B cell (primary cell): ENCODE measurements at regions of chr4 and their contacts with region 1.

Region 1: DNA sequence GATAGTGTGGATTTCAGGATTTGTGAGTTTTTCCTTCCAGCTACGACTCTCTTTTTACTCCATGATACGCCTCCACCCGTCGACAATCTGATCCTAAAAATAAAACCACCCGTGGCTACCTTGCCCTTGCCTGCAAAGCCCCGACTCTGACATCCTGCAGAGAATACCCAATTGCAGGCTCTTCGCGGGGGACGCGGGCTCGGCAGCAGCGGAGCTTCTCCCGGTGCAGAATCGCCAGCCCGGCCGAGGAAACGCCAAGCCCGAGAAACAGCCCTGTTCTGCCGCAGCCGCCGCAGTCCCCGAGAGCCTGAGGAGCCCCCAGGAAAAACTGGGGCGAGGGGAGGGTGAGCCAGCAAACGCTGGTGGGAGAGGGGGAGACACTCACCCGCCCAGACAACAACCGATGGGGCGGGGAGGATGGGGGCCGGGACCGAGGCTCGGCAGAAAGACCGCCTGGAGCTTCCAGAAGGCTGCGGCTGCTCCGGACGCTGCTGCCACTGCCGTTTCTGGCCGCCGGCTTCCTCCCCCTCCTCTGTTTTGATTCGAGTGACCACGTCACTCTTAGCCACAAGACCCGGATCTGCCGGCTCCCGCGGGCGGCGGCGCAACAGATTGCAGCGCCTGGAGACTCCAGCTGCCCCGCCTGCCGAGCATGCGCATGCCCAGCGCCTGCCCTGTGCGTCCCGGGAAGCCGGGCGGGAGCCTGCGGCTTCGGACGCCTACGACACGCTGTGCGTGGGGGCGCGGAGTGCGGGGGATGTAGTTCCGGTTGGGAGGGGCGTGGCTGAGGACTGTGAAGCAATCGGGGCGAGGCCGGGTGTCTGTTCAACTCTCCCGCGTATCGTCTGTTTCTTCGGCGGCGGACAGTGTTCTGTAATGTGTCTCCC is at the start of gene SMIM14:
- DNase-seq: peak; percentile 93
- ATAC-seq: peak; percentile 80
- H3K4me3 ChIP-seq: peak within 1 kb of the TSS; percentile 79 to 98 (median 93)
- H3K4me3 Mint-ChIP-seq: peak within 1 kb of the TSS; percentile 91
- H3K27ac ChIP-seq: peak within 1 kb of the TSS; percentile 87 to 92
- H3K27ac Mint-ChIP-seq: peak within 1 kb of the TSS; percentile 91
- H3K4me1 ChIP-seq: peaks cover 39% of the 10 kb centered on the region in 2 donors
- H3K4me1 Mint-ChIP-seq: peaks cover 56% of the 10 kb centered on the region
- H3K27me3 ChIP-seq: no peaks in the 10 kb centered on the region
- H3K27me3 Mint-ChIP-seq: no peaks in the 10 kb centered on the region
- CTCF ChIP-seq: no peak
- total RNA-seq, gene SMIM14: 43.5 and 56.0 TPM in 2 replicates

Region 2: DNA sequence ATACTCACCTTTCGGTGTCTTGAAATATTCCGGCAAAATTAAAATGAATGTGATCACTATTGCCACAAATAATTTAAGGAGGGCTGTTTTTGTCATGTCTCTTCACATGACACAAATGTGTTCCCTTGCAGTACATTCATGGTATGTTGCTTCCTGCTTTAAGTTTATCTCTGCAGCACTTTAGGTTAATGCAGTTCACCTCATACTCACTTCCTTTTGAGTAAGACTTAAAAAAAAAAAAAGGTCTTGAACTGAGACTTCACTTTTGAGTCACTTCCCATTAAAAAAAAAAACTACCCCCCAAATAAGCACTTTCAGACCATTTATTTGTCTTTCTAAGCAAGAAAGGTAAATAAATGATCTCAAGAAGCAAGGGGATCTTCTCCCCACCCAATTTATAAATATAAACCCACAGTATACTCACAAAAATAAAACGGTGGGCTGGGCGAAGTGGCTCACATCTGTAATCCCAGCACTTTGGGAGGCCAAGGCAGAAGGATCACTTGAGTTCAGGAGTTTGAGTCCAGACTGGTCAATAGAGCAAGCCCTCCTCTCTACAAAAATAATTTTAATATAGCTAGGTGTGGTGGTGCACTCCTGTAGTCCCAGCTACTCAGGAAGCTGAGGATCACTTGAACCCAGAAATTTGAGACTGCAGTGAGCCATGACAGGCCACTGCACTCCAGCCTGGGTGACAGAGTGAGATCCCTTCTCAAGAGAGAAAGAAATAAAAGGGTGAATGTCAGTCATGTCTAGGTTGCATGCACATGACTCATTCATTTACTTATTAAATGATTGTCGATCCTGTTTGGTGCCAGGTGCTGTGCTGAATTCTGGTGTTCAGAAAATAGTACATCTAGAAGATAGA is 606.1 kb before region 1 on chr4 and contains the start of gene TMEM156:
- CTCF ChIA-PET with region 1: no interaction called
- POLR2A ChIA-PET with region 1: no interaction called
- intact Hi-C with region 1: loop called (anchors 10 kb)
- DNase-seq: peak; percentile 78
- ATAC-seq: peak; percentile 68
- H3K4me3 ChIP-seq: peak within 1 kb of the TSS; percentile 63 to 98 (median 69)
- H3K4me3 Mint-ChIP-seq: peak within 1 kb of the TSS; percentile 85
- H3K27ac ChIP-seq: peak within 1 kb of the TSS; percentile 72 to 84
- H3K27ac Mint-ChIP-seq: peak within 1 kb of the TSS; percentile 87
- H3K4me1 ChIP-seq: peaks cover 27 to 36% of the 10 kb centered on the region in 2 donors
- H3K4me1 Mint-ChIP-seq: peaks cover 54% of the 10 kb centered on the region
- H3K27me3 ChIP-seq: no peaks in the 10 kb centered on the region
- H3K27me3 Mint-ChIP-seq: no peaks in the 10 kb centered on the region
- CTCF ChIP-seq: no peak
- total RNA-seq, gene TMEM156: 59.9 and 61.4 TPM in 2 replicates

Region 3: DNA sequence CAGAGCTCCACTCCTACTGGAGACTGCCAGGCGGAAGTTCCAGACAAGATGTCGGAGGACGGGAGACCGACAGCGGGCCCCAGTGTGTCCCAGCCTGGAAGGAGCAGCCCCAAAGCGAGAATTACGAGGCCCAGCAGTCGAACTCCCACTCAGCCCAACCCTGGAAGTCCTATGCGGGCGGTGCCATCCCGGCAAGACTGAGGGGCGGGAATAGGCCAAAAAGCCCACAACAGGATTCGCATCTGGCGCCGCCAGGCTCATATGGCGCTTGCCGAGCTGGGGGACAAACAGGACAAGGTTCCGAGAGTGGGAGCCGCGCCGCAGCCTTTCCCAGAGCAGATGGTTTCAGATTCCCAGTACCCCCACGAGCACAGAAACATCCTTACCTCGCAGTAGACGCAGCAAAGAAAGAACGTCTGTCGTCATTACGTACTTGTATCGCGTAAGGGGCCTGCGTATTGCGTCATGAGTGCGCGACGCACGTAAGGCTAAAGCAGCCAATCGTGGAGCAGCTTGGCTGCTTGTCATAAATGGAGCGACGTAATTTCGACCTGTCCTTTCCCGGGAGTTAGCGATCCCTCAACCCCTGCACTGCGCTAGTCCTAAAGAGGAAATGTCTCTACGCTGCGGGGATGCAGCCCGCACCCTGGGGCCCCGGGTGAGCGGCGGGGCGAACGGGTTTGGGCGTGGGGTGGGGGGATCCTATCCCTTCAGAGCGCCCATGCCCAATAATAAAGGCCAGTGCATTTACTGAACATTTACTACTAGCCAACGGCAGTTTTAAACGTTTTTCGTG is 179.9 kb before region 1 on chr4 and contains the starts of genes LIAS and RPL9:
- CTCF ChIA-PET with region 1: no interaction called
- POLR2A ChIA-PET with region 1: no interaction called
- intact Hi-C with region 1: loop called (anchors 2 kb)
- DNase-seq: peak; percentile 98
- ATAC-seq: peak; percentile 86
- H3K4me3 ChIP-seq: peak within 1 kb of the TSS; percentile 77 to 100 (median 98)
- H3K4me3 Mint-ChIP-seq: peak within 1 kb of the TSS; percentile 97
- H3K27ac ChIP-seq: peak within 1 kb of the TSS; percentile 98 to 99
- H3K27ac Mint-ChIP-seq: peak within 1 kb of the TSS; percentile 99
- H3K4me1 ChIP-seq: peaks cover 19 to 27% of the 10 kb centered on the region in 2 donors
- H3K4me1 Mint-ChIP-seq: peaks cover 38% of the 10 kb centered on the region
- H3K27me3 ChIP-seq: no peaks in the 10 kb centered on the region
- H3K27me3 Mint-ChIP-seq: no peaks in the 10 kb centered on the region
- CTCF ChIP-seq: no peak
- total RNA-seq, gene LIAS: 20.9 and 24.7 TPM in 2 replicates
- total RNA-seq, gene RPL9: 2,031 and 2,048 TPM in 2 replicates

Region 4: GRCh38 chr4:39527273-39528060 is 111.1 kb before region 1 on chr4 and contains the start of gene UGDH:
- CTCF ChIA-PET with region 1: interaction called, 22 read pairs
- POLR2A ChIA-PET with region 1: interaction called, 26 read pairs
- intact Hi-C with region 1: loop called (anchors 1 kb)
- DNase-seq: peak; percentile 93
- ATAC-seq: peak; percentile 99
- H3K4me3 ChIP-seq: peak within 1 kb of the TSS; percentile 46 to 98 (median 72)
- H3K4me3 Mint-ChIP-seq: peak within 1 kb of the TSS; percentile 98
- H3K27ac ChIP-seq: peak within 1 kb of the TSS; percentile 51 to 86
- H3K27ac Mint-ChIP-seq: peak within 1 kb of the TSS; percentile 96
- H3K4me1 ChIP-seq: peaks cover 14 to 15% of the 10 kb centered on the region in 2 donors
- H3K4me1 Mint-ChIP-seq: peaks cover 21% of the 10 kb centered on the region
- H3K27me3 ChIP-seq: no peaks in the 10 kb centered on the region
- H3K27me3 Mint-ChIP-seq: no peaks in the 10 kb centered on the region
- CTCF ChIP-seq: no peak
- total RNA-seq, gene UGDH: 18.5 and 25.4 TPM in 2 replicates

Region 5: GRCh38 chr4:39609454-39609931 is 29.1 kb before region 1 on chr4:
- CTCF ChIA-PET with region 1: interaction called, 5 read pairs
- POLR2A ChIA-PET with region 1: interaction called, 16 read pairs
- intact Hi-C with region 1: loop called (anchors 1 kb)
- DNase-seq: peak; percentile 73
- ATAC-seq: peak; percentile 79
- H3K4me3 ChIP-seq: peak overlapping the region in 3 of 5 experiments; percentile 38 to 47 (median 45)
- H3K4me3 Mint-ChIP-seq: peak overlapping the region; percentile 73
- H3K27ac ChIP-seq: peak overlapping the region; percentile 57 to 69
- H3K27ac Mint-ChIP-seq: peak overlapping the region; percentile 73
- H3K4me1 ChIP-seq: peaks cover 49 to 55% of the 10 kb centered on the region in 2 donors
- H3K4me1 Mint-ChIP-seq: peaks cover 58% of the 10 kb centered on the region
- H3K27me3 ChIP-seq: no peaks in the 10 kb centered on the region
- H3K27me3 Mint-ChIP-seq: no peaks in the 10 kb centered on the region
- CTCF ChIP-seq: no peak

Region 6: DNA sequence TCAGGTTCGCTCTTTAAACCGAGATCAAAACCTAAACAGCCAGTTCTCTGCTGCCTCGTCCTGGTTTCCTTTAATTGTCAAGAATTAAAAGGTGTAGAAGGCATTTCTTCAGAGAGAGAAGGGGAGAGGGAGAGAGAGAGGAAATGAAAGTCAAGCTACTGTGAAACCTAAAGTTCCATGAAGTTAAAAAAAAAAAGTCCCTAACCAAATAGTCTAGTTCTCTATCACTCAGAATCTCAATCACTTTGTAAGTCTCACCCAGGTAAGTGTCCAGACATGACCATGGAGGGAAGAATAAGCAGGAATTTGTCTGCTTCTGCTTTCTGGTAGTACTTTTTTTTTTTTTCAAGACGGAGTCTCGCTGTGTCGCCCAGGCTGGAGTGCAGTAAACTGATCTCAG is 18.9 kb after region 1 on chr4:
- CTCF ChIA-PET with region 1: interaction called, 7 read pairs
- POLR2A ChIA-PET with region 1: interaction called, 3 read pairs
- intact Hi-C with region 1: loop called (anchors 2 kb)
- DNase-seq: peak; percentile 73
- ATAC-seq: peak; percentile 88
- H3K4me3 ChIP-seq: peak overlapping the region in 1 of 5 experiments; percentile 9
- H3K4me3 Mint-ChIP-seq: peak overlapping the region; percentile 68
- H3K27ac ChIP-seq: peak overlapping the region in 1 of 2 donors; percentile 12
- H3K27ac Mint-ChIP-seq: peak overlapping the region; percentile 61
- H3K4me1 ChIP-seq: peaks cover 16 to 29% of the 10 kb centered on the region in 2 donors
- H3K4me1 Mint-ChIP-seq: peaks cover 25% of the 10 kb centered on the region
- H3K27me3 ChIP-seq: no peaks in the 10 kb centered on the region
- H3K27me3 Mint-ChIP-seq: no peaks in the 10 kb centered on the region
- CTCF ChIP-seq: no peak

Region 7: DNA sequence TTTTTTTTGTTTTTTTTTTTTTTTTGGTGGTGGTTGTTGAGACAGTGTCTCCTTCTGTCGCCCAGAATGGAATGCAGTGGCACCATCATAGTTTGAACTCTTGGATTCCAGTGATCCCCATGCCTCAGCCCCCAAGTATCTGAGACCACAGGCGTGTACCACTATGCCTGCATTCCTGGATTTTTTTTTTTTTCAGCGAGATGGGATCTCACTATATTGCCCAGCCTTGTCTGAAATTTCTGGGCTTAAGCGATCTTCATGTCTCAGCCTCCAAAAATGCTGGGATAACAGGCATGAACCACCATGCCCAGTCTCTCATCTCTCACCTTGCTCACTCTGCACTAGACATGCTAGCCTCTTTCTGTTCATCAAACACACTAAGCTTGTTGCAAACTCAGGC is 163.4 kb after region 1 on chr4:
- CTCF ChIA-PET with region 1: no interaction called
- POLR2A ChIA-PET with region 1: no interaction called
- intact Hi-C with region 1: no loop called
- DNase-seq: no peak
- ATAC-seq: no peak
- H3K4me3 ChIP-seq: no peak overlapping the region
- H3K4me3 Mint-ChIP-seq: no peak overlapping the region
- H3K27ac ChIP-seq: no peak overlapping the region
- H3K27ac Mint-ChIP-seq: no peak overlapping the region
- H3K4me1 ChIP-seq: no peaks in the 10 kb centered on the region
- H3K4me1 Mint-ChIP-seq: no peaks in the 10 kb centered on the region
- H3K27me3 ChIP-seq: no peaks in the 10 kb centered on the region
- H3K27me3 Mint-ChIP-seq: no peaks in the 10 kb centered on the region
- CTCF ChIP-seq: no peak

Region 8: GRCh38 chr4:40040908-40041307 is 402.3 kb after region 1 on chr4:
- CTCF ChIA-PET with region 1: no interaction called
- POLR2A ChIA-PET with region 1: no interaction called
- intact Hi-C with region 1: no loop called
- DNase-seq: no peak
- ATAC-seq: no peak
- H3K4me3 ChIP-seq: no peak overlapping the region
- H3K4me3 Mint-ChIP-seq: no peak overlapping the region
- H3K27ac ChIP-seq: no peak overlapping the region
- H3K27ac Mint-ChIP-seq: no peak overlapping the region
- H3K4me1 ChIP-seq: no peaks in the 10 kb centered on the region
- H3K4me1 Mint-ChIP-seq: no peaks in the 10 kb centered on the region
- H3K27me3 ChIP-seq: no peaks in the 10 kb centered on the region
- H3K27me3 Mint-ChIP-seq: no peaks in the 10 kb centered on the region
- CTCF ChIP-seq: no peak